Activated CD4-positive, alpha-beta memory T cell treated with anti-CD3 and anti-CD28 coated beads for 36 hours (primary cell): ENCODE measurements at regions of chr12 and their contacts with region 1.

Region 1: DNA sequence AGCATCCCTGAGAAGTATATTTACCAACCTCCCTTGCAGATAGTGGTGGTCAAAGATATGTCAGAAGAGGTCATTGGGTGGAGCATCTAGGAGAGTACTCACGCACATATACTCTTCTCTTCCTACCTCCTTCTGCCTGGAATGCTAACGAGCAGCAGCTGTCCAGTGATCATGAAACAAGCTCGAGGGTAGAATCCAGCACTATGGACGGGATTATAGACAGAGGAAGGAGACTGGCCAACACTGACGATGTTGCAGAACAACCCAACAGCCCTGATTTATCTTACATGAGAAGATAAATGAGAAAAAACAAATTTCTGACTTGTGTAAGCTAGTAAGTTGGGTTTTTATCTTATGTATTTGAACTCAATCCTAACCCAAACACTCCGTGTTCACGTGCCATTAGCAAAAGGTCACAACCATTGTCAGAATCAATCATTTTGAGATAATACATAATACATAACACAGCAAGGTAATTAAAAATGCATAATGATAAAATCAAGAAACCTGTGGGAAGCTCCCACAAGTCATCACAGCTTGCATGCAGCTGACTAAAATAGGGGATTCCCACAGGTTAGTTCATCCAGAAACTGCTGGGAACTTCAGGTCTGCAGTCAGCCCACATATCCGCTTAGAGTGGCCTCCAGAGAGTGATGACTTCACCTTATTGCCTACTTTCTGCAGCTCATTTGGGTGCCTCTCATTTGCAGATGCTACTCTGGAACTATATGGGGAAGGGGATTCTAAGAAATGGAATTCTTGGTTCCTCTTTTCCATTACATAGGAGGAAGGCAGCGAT is 36.3 kb upstream of the STK38L start:
- DNase-seq: peak; percentile 71
- H3K4me3 Mint-ChIP-seq: no peak overlapping the region
- H3K27ac Mint-ChIP-seq: peak overlapping the region; percentile 51
- H3K4me1 Mint-ChIP-seq: peaks cover 20% of the 10 kb centered on the region
- H3K27me3 Mint-ChIP-seq: no peaks in the 10 kb centered on the region

Region 2: DNA sequence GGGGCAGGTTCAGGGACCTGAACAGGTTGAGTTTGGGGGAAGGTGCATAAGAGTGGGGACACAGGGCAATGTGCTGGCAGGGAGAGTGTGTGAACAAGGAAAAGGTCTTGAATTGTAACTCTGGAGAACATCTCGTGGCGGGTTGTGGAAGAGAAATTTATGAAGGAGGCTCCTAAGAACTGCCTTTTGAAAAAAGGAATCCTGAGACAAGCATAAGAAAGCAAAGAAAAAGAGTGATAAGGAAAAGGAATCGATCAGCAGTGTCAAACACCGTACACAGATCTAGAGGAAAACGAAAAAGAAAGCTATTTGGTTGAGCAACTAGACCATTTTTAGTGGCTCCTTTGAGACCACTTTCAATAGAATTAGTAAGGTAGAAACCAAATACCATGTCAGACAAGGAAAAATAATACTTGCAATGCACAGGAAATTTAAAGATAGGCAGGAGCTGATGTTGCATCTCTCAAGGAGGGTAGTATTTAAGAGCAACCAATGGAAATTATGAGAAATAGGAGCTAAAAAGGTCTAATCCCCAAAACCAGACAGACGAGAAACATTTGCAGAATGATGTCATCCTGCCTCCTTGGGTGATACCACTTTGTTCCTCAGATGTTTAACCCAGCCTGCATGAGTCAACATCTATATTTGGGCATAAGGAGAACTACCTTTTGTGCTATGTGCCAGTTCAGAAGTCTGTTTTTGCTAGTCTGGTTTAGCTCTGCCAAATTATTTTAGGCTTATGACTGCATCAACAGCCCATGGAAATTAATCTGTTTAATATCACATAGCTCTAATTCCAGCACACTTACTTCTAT is 28.2 kb before region 1 on chr12:
- CTCF ChIA-PET with region 1: interaction called, 6 read pairs
- POLR2A ChIA-PET with region 1: interaction called, 6 read pairs
- intact Hi-C with region 1: loop called (anchors 1 kb)
- DNase-seq: peak; percentile 47
- H3K4me3 Mint-ChIP-seq: peak overlapping the region; percentile 40
- H3K27ac Mint-ChIP-seq: peak overlapping the region; percentile 71
- H3K4me1 Mint-ChIP-seq: peaks cover 42% of the 10 kb centered on the region
- H3K27me3 Mint-ChIP-seq: no peaks in the 10 kb centered on the region

Region 3: GRCh38 chr12:27220057-27220987 is 12.5 kb after region 1 on chr12:
- CTCF ChIA-PET with region 1: interaction called, 3 read pairs
- POLR2A ChIA-PET with region 1: interaction called, 3 read pairs
- intact Hi-C with region 1: loop called (anchors 1 kb)
- DNase-seq: peak; percentile 55
- H3K4me3 Mint-ChIP-seq: no peak overlapping the region
- H3K27ac Mint-ChIP-seq: peak overlapping the region; percentile 62
- H3K4me1 Mint-ChIP-seq: peaks cover 23% of the 10 kb centered on the region
- H3K27me3 Mint-ChIP-seq: peaks cover 2% of the 10 kb centered on the region

Region 4: DNA sequence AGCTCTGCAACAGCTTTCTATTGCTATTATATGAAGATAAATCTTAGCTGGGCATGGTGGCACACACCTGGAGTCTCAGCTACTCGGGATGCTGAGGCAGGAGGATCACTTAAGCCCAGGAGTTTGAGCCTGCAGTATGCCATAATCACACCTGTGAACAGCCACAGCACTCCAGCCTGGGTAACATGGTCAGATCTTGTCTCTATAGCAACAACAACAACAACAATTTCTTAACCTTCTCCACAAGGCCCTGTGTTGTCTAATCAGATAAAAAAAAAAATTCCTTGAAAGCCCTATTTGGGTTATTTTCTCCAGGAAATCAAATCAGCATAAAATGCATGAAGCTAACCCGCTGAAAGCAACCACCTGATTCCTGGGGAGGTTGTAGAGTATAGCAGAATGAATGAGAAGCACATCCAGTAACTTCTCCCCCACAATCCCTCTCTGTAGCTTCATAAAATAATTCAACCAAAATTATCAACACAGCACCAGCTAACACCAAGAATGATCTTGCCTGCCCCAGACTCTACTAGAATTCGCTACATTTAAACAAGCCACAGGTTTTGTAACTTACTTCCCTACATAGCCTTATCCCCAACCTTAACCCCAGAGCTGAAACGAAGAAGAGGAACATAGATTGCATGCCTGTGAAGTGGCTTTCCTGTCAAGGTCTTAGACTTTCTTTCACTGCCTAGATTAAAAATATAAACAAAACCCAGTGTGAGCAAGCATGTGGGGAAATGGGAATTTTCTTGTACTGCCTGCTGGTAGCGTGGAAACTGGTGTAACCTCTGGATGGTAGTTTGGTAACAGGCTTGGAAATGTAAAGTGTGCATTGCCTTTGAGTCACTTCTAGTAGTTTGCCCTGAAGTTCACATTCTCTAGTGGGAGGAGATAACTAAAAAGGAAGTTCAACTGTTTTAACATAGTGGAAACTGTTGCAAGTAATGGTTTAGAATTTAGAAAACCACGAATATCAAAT is 30.3 kb after region 1 on chr12:
- CTCF ChIA-PET with region 1: interaction called, 3 read pairs
- POLR2A ChIA-PET with region 1: interaction called, 5 read pairs
- intact Hi-C with region 1: loop called (anchors 1 kb)
- DNase-seq: no peak
- H3K4me3 Mint-ChIP-seq: no peak overlapping the region
- H3K27ac Mint-ChIP-seq: peak overlapping the region; percentile 67
- H3K4me1 Mint-ChIP-seq: peaks cover 25% of the 10 kb centered on the region
- H3K27me3 Mint-ChIP-seq: peaks cover 1% of the 10 kb centered on the region

Region 5: DNA sequence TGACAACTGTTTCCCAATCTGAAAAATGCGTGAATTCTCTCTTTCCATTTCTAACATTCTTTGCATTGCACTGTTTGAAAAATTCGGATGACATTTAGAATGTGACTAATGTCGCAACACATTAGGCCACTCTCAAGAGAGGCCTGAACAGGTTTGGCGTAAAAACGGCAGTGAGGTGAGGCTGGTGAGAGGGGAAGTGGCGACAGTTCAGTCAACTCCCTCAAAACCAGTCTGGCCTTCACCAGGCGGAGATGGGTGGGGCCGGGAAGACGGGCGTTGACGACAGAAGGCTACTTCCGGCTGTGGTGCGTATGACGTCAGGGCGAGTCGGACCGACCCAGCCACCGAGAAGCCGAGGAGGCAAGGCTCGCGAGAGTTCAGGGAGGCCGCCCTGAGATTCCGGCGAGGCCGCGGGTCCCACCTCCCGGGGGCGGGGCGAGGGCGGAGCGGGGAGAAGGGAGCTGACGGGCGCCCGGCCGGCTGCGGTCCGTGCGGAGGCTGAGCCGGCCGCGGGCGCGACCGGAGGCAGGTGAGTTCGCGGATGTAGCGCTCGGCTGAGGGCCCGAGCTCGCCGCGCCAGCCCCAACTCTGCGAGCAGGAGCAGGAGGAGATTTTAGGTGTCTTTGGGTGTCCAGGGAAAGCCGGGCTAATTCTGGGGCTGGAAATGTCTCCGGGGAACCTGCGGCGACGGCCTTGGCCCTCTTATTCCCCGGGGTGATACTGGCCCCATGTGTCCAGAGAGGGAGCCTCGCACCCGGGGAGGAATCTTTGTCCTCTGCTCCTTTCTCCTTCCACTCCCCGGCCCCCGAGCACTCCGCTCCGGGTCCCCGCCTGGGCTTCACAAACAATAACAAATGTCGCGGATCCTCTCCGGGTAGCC is 36.2 kb after region 1 on chr12 and contains the start of gene STK38L:
- CTCF ChIA-PET with region 1: no interaction called
- POLR2A ChIA-PET with region 1: interaction called, 5 read pairs
- intact Hi-C with region 1: loop called (anchors 1 kb)
- DNase-seq: peak; percentile 98
- H3K4me3 Mint-ChIP-seq: peak within 1 kb of the TSS; percentile 100
- H3K27ac Mint-ChIP-seq: peak within 1 kb of the TSS; percentile 91
- H3K4me1 Mint-ChIP-seq: peaks cover 45% of the 10 kb centered on the region
- H3K27me3 Mint-ChIP-seq: no peaks in the 10 kb centered on the region
- total RNA-seq, gene STK38L: 25.1 to 25.2 TPM

Region 6: GRCh38 chr12:27277846-27278260 is 70.0 kb after region 1 on chr12:
- CTCF ChIA-PET with region 1: no interaction called
- POLR2A ChIA-PET with region 1: no interaction called
- intact Hi-C with region 1: loop called (anchors 5 kb)
- DNase-seq: no peak
- H3K4me3 Mint-ChIP-seq: no peak overlapping the region
- H3K27ac Mint-ChIP-seq: no peak overlapping the region
- H3K4me1 Mint-ChIP-seq: peaks cover 12% of the 10 kb centered on the region
- H3K27me3 Mint-ChIP-seq: no peaks in the 10 kb centered on the region

Region 7: GRCh38 chr12:27710592-27711316 is 502.9 kb after region 1 on chr12 and contains the start of gene MRPS35:
- CTCF ChIA-PET with region 1: no interaction called
- POLR2A ChIA-PET with region 1: no interaction called
- intact Hi-C with region 1: no loop called
- DNase-seq: peak; percentile 95
- H3K4me3 Mint-ChIP-seq: peak within 1 kb of the TSS; percentile 93
- H3K27ac Mint-ChIP-seq: peak within 1 kb of the TSS; percentile 90
- H3K4me1 Mint-ChIP-seq: peaks cover 17% of the 10 kb centered on the region
- H3K27me3 Mint-ChIP-seq: peaks cover 3% of the 10 kb centered on the region
- total RNA-seq, gene MRPS35: 49.2 to 50.2 TPM